ENCODE measurements at regions of chr17 and their contacts with region 1.

Region 1: DNA sequence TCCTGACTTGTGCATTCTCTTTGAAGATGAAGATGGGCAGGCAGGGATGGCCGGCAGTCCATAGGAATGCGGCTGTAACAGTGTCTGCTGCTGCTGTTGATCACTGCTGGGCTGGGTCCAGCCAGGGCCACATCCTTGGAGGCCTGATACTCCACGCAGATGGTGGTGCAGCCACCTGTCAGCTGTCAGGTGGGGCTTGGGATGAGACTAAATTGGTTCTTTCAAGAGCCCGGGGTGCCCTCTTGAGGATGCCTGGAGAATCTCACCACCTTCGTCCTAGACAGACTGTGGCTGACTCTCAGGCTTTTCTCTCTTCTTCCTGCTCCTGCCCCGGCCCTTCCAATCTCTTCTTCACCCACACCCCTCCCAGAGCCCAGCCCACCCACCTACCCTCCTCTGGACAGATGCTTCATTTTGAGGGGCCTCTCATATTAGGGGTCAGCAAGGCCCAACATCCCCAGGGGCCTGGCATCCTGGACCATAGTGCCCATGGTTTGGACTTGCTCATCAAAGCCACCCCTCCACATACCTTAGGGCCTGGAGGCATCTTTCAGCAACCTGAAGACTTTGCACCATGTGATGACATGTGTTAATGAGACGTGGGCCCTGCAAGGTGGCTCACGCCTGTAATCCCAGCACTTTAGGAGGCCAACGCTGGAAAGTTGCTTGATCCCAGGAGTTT is 19.1 kb downstream of the OSBPL7 start:
- DNase-seq: peak in 1 of 2 experiments; percentile 74
- H3K4me3 ChIP-seq: no peak overlapping the region
- H3K27ac ChIP-seq: no peak overlapping the region
- H3K4me1 ChIP-seq: no peaks in the 10 kb centered on the region
- H3K27me3 ChIP-seq: no peaks in the 10 kb centered on the region
- CTCF ChIP-seq: peak; percentile 55 to 84 (median 83)
- EP300 ChIP-seq: no peak
- POLR2A ChIP-seq: no peak
- RAD21 ChIP-seq: peak; percentile 84 to 86

Region 2: DNA sequence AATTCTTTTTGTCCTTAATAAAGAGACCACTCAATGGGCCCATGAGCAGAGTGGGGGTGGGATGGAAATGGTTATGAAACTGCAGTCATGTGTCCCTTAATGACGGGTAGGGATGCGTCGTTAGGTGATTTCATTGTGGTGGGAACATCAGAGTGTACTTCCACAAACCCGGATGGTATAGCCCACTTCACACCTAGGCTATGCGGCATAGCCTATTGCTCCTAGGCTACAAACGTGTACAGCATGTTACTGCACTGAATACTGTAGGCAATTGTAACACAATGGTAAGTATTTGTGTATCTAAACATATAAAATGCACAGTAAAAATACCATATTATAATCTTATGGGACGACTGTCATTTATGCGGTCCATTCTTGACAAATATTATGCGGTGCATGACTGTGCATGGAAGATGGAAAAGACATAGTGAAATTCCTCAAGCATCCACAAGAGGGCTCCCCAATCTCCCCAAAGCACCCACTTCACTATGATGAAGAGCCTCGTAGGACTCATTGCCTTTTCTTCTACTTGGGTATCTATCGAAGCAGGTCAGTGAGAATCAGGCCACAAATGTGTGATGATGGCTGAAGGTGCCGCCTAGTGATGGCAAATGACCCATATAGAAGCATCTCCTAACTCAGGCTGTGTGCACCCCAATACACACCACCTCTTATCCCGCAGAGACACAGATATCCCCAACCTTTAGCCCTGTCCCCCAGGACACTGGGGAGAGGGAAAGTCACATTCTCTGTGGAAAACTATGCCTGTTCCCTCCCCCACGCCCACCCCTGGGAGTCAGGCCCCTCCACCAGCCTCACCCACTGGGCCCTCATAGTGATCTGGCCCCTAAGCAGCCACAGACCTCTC is 25.9 kb before region 1 on chr17:
- CTCF ChIA-PET with region 1: interaction called, 57 read pairs
- POLR2A ChIA-PET with region 1: interaction called, 3 read pairs
- DNase-seq: no peak
- H3K4me3 ChIP-seq: no peak overlapping the region
- H3K27ac ChIP-seq: no peak overlapping the region
- H3K4me1 ChIP-seq: no peaks in the 10 kb centered on the region
- H3K27me3 ChIP-seq: peaks cover 0 to 16% (median 10%) of the 10 kb centered on the region in 4 experiments; a peak in 6 of 7 replicates
- CTCF ChIP-seq: peak in 2 of 3 experiments; percentile 72 to 76; a peak in 3 of 4 replicates
- EP300 ChIP-seq: no peak
- POLR2A ChIP-seq: no peak
- RAD21 ChIP-seq: peak; percentile 65 to 76

Region 3: GRCh38 chr17:47789611-47790561 is 12.6 kb before region 1 on chr17:
- CTCF ChIA-PET with region 1: interaction called, 52 read pairs
- POLR2A ChIA-PET with region 1: interaction called, 5 read pairs
- DNase-seq: peak; percentile 31 to 83
- H3K4me3 ChIP-seq: peak overlapping the region; percentile 49 to 69 (median 62)
- H3K27ac ChIP-seq: no peak overlapping the region
- H3K4me1 ChIP-seq: peaks cover 0 to 3% (median 2%) of the 10 kb centered on the region in 4 experiments; a peak in 3 of 7 replicates
- H3K27me3 ChIP-seq: peaks cover 6 to 33% (median 26%) of the 10 kb centered on the region in 4 experiments
- CTCF ChIP-seq: peak; percentile 52 to 59 (median 54)
- EP300 ChIP-seq: no peak
- POLR2A ChIP-seq: no peak
- RAD21 ChIP-seq: peak; percentile 59 to 75